ENCODE measurements at regions of chr22 and their contacts with region 1.

Region 1: DNA sequence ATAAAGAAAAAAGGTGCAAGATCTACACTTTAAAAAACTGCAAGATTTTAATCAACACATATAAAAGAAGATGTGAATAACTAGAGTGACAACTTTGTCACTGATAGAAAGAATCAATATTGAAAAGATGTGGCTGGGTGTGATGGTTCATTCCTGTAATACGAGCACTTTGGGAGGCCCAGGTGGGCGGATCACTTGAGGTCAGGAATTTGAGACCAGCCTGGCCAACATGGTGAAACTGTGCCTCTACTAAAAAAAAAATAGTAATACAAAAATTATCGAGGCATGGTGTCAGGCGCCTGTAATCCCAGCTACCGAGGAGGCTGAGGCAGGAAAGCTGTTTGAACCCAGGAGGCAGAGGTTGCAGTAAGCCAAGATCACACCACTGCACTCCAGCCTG is 21.0 kb upstream of the FBLN1 start:
- DNase-seq: no peak
- ATAC-seq: no peak
- H3K4me3 ChIP-seq: no peak overlapping the region
- H3K27ac ChIP-seq: no peak overlapping the region
- H3K4me1 ChIP-seq: peaks cover 0 to 15% (median 0%) of the 10 kb centered on the region in 12 donors
- H3K27me3 ChIP-seq: no peaks in the 10 kb centered on the region
- CTCF ChIP-seq: no peak
- POLR2A ChIP-seq: no peak

Region 2: DNA sequence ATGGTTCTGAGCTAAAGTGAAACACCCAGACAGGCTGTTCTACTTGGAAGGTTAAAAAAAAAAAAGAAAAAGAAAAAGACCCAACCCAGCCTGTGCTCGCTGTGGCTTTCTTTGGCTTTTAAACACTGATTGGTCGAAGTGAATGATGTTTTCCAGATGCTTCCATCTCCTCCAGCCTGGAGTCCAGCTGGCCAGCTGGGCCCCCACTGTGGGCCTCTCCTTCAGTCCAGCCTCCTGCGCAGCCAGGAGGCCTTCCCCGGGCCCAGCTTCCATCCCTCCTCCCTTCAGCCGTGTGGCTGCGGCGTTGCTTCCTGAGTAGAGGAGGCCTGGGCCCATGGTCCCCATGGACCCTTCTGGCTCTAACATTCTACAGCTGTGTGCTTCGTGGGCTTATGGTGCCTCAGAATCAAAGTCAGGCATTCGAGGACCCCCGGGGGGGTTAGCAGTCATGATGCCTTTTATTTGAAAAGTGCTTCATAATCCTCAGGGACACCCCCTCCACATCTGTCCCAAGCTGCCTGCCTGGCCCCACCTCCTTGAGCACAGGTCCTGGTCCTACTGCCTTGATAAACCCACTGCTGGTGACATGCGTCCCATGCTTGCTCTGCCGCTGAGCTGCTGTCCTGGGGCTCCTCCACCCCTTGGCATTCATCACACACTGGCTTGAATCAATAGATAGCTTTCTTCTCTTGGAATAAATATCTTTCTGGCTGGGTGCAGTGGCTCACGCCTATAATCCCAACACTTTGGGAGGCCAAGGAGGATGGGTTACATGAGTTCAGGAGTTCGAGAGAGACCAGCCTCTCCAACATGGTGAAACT is 21.2 kb before region 1 on chr22:
- intact Hi-C with region 1: loop called in 1 of 10 experiments (anchors 1 kb)
- DNase-seq: peak; percentile 76 to 91 (median 80)
- ATAC-seq: peak; percentile 94 to 98 (median 97)
- H3K4me3 ChIP-seq: no peak overlapping the region
- H3K27ac ChIP-seq: peak overlapping the region in 10 of 12 donors; percentile 16 to 82 (median 62)
- H3K4me1 ChIP-seq: peaks cover 0 to 19% (median 4%) of the 10 kb centered on the region in 12 donors
- H3K27me3 ChIP-seq: peaks cover 0 to 2% (median 0%) of the 10 kb centered on the region in 9 donors
- CTCF ChIP-seq: no peak
- POLR2A ChIP-seq: no peak

Measured in heart left ventricle (tissue), 16 donors.